Activated T-helper 1 cell treated with anti-CD3 and anti-CD28 coated beads, Interleukin-12 subunit alpha, Interleukin-12 subunit beta, Interleukin-2, Interleukin-4 antibody, amounts not matched to agents 30 ng/mL and 10 ng/mL and 1 ng/mL, durations not matched to agents 14 hours and 24 hours and 36 hours (primary cell): ENCODE measurements at regions of chr12 and their contacts with region 1.

Region 1: DNA sequence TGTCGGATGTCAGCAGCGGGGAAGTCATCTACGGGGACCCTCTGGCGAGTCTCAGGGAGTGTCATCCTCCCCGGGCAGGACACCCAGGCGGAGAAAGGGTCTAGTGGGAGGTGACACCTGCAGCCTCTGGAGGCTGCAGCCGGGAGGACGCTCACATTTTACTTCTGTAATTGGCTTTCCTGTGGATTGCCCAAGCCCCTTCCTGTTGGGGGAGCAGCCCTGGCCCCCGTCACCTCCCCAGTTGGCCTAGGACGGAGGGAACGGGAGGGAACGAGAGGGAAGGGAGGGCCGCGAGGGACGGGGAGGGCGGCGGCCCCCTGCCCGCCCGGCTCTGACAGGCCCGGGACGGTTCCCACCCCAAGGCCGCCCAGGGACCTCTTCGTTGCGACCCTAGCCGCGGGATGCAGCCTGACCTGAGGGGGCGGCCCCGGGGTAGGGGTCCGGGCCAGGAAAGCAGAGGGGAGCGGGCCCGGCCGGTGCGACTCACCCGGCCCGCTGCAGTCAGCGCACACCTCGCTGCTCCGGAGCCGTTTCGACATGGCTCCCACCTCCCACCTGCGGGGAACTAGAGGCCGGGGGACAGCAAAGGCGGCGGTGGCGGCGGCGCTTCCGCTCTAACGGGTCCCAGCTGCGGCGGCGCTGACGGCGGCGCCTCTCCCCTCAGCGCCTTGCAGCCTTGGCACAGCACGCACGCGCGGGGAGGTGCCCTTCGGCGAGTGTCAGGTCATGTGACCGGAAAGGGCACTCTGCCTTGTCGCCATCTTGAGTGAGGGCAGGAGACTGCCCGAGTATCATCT is at the start of gene GIT2:
- DNase-seq: peak; percentile 95
- H3K4me3 Mint-ChIP-seq: peak within 1 kb of the TSS; percentile 99
- H3K27ac Mint-ChIP-seq: peak within 1 kb of the TSS; percentile 96
- H3K4me1 Mint-ChIP-seq: peaks cover 72% of the 10 kb centered on the region
- H3K27me3 Mint-ChIP-seq: no peaks in the 10 kb centered on the region
- total RNA-seq, gene GIT2: 86.2 and 87.5 TPM in 2 replicates

Region 2: GRCh38 chr12:109421355-109422087 is 574.4 kb before region 1 on chr12:
- intact Hi-C with region 1: no loop called
- DNase-seq: no peak
- H3K4me3 Mint-ChIP-seq: no peak overlapping the region
- H3K27ac Mint-ChIP-seq: no peak overlapping the region
- H3K4me1 Mint-ChIP-seq: no peaks in the 10 kb centered on the region
- H3K27me3 Mint-ChIP-seq: no peaks in the 10 kb centered on the region

Region 3: DNA sequence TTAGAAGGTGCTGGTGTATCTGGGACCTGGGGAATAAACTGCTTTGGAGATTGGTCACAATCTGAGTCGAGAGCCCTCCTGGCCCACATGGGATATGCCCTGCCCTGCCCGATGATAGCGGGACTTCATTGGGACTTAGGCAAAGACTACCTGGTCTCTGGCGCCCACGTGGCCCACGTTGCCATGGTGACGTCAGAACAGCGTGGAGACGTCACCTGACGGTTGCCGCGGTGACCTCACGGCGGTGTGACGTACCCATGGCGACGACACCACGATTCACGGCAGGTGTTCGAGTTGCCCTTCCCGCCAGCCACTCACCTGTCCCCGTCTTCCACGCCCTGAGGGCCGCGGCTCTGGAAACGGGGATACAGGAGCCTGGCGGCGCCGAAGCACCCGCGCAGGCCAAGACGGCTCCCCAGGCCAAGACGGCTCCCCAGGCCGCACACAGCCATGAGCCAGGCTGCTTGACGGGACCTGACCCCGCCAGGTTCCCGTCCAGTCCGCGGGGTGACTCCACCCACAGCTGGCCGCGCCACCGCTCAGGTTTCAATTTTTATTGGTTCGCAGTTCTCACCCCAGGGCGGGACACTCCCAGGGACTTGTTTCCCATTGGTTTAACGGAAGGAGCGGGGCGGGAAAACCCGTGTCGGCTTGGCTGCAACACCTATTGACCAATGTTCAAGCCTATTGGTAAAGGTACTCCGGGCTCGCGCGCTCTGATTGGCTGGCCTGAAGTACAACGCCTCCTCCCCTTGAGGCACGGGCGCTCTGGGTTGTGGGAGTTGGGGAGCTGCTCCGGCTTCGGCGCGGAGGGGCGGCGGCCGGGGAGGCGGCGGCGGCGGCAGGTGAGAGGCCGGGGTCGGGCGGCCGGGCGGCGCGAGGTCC is 422.6 kb before region 1 on chr12 and contains the starts of genes MMAB and MVK:
- intact Hi-C with region 1: loop called (anchors 10 kb)
- DNase-seq: peak; percentile 99
- H3K4me3 Mint-ChIP-seq: peak within 1 kb of the TSS; percentile 91
- H3K27ac Mint-ChIP-seq: peak within 1 kb of the TSS; percentile 88
- H3K4me1 Mint-ChIP-seq: peaks cover 30% of the 10 kb centered on the region
- H3K27me3 Mint-ChIP-seq: no peaks in the 10 kb centered on the region
- total RNA-seq, gene MMAB: 41.9 and 42.2 TPM in 2 replicates
- total RNA-seq, gene MVK: 14.2 and 15.8 TPM in 2 replicates

Region 4: DNA sequence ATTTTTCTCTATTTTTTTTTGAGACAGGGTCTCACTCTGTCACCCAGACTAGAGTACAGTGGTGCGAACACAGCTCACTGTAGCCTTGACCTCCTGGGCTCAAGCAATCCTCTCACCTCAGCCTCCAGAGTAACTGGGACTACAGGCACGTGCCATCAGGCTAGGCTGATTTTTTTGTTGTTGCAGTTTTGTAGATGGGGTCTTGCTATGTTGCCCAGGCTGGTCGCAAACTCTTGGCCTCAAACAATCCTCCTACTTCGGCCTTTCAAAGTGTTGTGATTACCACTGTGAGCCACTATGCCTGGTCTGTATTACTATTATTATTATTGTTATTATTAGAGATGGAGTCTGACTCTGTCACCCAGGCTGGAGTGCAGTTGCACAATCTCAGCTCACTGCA is 23.1 kb before region 1 on chr12:
- intact Hi-C with region 1: loop called (anchors 1 kb)
- DNase-seq: no peak
- H3K4me3 Mint-ChIP-seq: no peak overlapping the region
- H3K27ac Mint-ChIP-seq: no peak overlapping the region
- H3K4me1 Mint-ChIP-seq: peaks cover 27% of the 10 kb centered on the region
- H3K27me3 Mint-ChIP-seq: no peaks in the 10 kb centered on the region

Region 5: GRCh38 chr12:110007881-110008280 is 12.0 kb after region 1 on chr12:
- intact Hi-C with region 1: loop called (anchors 2 kb)
- DNase-seq: no peak
- H3K4me3 Mint-ChIP-seq: no peak overlapping the region
- H3K27ac Mint-ChIP-seq: no peak overlapping the region
- H3K4me1 Mint-ChIP-seq: peaks cover 79% of the 10 kb centered on the region
- H3K27me3 Mint-ChIP-seq: no peaks in the 10 kb centered on the region

Region 6: GRCh38 chr12:110048242-110049027 is 52.6 kb after region 1 on chr12 and contains the start of gene C12orf76:
- intact Hi-C with region 1: loop called (anchors 1 kb)
- DNase-seq: peak; percentile 89
- H3K4me3 Mint-ChIP-seq: peak within 1 kb of the TSS; percentile 84
- H3K27ac Mint-ChIP-seq: peak within 1 kb of the TSS; percentile 91
- H3K4me1 Mint-ChIP-seq: peaks cover 34% of the 10 kb centered on the region
- H3K27me3 Mint-ChIP-seq: no peaks in the 10 kb centered on the region
- total RNA-seq, gene C12orf76: 20.3 and 20.8 TPM in 2 replicates

Region 7: DNA sequence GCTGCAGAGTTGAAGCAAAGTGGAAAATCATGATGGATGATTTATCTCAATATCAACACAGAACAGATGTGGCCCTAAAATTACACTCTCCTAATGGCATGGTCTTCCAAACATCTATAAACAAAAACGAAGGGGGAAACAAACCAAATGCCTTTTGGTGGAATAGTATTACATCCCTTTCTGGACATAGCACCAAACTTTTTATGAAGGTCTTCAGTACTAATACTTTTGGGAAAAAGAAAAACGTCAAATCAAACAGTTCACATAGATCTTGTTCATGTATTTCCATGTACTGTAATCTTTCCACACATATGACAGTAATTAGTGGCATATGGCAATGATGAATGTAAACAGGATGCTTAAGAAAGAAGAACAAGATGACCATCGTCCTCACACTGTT is 430.5 kb after region 1 on chr12:
- intact Hi-C with region 1: no loop called
- DNase-seq: no peak
- H3K4me3 Mint-ChIP-seq: no peak overlapping the region
- H3K27ac Mint-ChIP-seq: no peak overlapping the region
- H3K4me1 Mint-ChIP-seq: no peaks in the 10 kb centered on the region
- H3K27me3 Mint-ChIP-seq: peaks cover 28% of the 10 kb centered on the region